ENCODE measurements at regions of chr10 and their contacts with region 1.

Region 1: DNA sequence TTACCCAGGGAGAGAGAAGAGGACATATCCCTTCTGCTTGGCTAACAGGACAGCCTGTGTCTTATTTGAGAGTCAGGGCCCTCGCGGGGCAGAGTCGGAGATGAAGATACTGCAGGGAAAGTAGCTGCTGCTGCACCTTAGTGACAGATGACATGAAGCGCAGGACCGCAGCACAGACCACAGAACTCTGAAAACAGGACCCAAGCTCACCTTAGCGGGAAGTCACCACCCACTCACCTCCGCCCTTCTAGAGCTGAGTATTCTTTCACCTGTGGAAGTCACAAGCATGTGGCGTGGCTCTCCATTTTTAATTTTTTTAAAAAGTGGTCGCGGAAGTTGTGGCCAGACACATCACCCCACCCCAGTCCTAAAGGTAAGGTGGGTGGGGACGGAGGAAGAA is 191.4 kb downstream of the FAM107B start:
- DNase-seq: peak; percentile 70 to 95 (median 78)
- ATAC-seq: peak; percentile 77
- H3K4me3 ChIP-seq: no peak overlapping the region
- H3K4me3 Mint-ChIP-seq: peak overlapping the region; percentile 78
- H3K27ac ChIP-seq: peak overlapping the region; percentile 90 to 95
- H3K27ac Mint-ChIP-seq: peak overlapping the region; percentile 97
- H3K4me1 ChIP-seq: peaks cover 93% of the 10 kb centered on the region
- H3K4me1 Mint-ChIP-seq: peaks cover 98% of the 10 kb centered on the region
- H3K27me3 ChIP-seq: no peaks in the 10 kb centered on the region
- H3K27me3 Mint-ChIP-seq: no peaks in the 10 kb centered on the region
- CTCF ChIP-seq: no peak

Region 2: DNA sequence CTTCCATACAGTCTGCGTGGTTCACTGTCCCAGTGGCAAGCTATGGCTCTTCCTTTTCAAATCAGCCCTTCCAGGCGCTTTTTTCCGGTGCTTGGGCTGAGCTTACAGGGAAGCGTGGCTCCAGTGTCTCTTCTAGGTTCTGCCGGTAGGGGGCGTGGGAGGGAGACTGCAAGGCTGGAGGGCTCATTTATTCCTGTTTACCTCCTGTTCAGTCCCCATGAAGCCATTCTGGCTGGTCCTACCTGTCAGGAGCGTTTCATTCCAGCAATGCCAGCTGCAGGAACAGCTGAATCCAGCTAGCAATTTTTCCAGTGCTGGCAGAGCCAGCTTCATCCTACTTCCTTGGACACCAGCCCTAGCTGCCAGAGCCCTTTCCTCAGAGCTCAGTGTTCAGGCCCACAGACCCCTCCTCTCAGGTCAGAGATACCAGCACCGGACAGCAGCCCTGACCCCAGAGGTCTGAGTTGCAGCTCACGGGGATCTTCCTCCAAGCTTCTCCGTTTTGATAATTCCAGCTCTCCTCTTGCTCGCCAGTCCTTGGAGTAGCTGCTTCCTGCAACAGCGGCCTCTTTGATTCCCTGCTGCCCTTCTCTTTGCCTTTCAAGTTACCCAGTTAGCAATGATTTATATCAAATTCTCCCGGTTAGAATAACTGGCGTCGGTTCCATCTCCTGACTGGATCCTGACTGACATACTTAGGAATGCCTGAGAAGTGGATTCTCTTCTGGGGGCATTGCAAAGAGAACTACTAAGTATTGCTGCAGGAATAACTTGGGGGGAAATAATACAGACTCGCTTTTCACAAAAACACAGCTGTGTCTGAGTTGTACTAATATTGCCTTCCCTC is 382.3 kb before region 1 on chr10:
- CTCF ChIA-PET with region 1: no interaction called
- POLR2A ChIA-PET with region 1: no interaction called
- intact Hi-C with region 1: no loop called
- DNase-seq: no peak
- ATAC-seq: no peak
- H3K4me3 ChIP-seq: no peak overlapping the region
- H3K4me3 Mint-ChIP-seq: no peak overlapping the region
- H3K27ac ChIP-seq: no peak overlapping the region
- H3K27ac Mint-ChIP-seq: no peak overlapping the region
- H3K4me1 ChIP-seq: no peaks in the 10 kb centered on the region
- H3K4me1 Mint-ChIP-seq: no peaks in the 10 kb centered on the region
- H3K27me3 ChIP-seq: peaks cover 8 to 13% of the 10 kb centered on the region in 2 experiments
- H3K27me3 Mint-ChIP-seq: peaks cover 33% of the 10 kb centered on the region
- CTCF ChIP-seq: no peak

Region 3: DNA sequence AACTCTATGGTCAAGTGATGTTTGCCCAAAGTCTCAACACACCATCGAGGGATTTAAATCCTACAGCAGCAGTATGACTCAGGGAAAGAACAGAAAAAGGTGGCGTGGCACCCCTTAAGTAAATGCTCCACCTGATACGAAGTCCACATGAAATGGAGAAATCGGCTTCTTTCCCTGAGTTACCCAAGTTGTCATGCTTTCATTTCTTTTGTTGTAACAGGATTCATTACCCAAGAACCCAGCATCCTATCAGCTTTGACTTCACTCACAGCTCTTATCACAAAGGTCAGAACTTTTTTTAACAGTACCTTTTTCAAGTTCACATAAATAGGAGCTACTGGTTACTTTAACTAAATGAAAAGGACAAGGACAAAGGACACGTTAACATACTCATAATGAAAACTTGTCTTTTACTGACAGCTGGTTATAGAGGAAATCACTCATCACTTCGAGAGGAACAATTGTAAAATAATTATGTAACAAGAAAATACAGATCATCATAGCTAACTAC is 32.7 kb before region 1 on chr10:
- CTCF ChIA-PET with region 1: interaction called, 3 read pairs
- POLR2A ChIA-PET with region 1: interaction called, 16 read pairs
- intact Hi-C with region 1: no loop called
- DNase-seq: no peak
- ATAC-seq: no peak
- H3K4me3 ChIP-seq: no peak overlapping the region
- H3K4me3 Mint-ChIP-seq: peak overlapping the region; percentile 62
- H3K27ac ChIP-seq: peak overlapping the region in 1 of 2 donors; percentile 26
- H3K27ac Mint-ChIP-seq: peak overlapping the region; percentile 98
- H3K4me1 ChIP-seq: peaks cover 68% of the 10 kb centered on the region
- H3K4me1 Mint-ChIP-seq: peaks cover 99% of the 10 kb centered on the region
- H3K27me3 ChIP-seq: no peaks in the 10 kb centered on the region
- H3K27me3 Mint-ChIP-seq: no peaks in the 10 kb centered on the region
- CTCF ChIP-seq: no peak

Region 4: DNA sequence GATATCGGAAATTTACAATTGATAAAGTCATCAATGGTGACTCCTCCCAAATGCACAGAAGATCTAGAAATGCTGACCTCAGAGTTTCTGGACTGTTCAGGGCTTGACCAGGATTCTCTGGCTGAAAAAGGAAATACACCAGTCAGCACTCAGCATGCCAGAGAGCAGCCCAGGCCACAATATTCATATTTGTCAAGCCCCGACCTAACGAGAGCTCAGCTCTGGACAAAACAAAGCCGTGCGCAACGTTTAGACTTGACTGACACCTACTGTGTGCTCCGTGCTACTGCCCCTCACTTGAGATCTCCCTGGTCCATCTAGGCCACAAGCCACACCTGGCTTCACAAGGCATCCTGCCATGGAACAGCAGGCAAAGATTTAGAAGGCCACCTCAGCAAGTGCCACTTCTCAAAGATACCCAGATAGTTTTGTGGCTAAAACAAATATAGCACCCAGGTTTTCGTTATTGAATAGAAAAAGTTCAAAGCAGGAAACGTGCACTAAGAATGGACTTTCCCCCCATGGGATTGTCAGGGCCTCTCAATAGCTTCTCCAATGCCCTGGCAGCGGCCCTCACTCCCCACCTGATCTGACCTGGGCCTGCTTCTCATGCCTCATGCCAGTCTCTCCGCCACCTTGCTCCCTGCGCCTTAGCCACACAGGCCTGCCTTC is 26.8 kb before region 1 on chr10:
- CTCF ChIA-PET with region 1: interaction called, 8 read pairs
- POLR2A ChIA-PET with region 1: interaction called, 19 read pairs
- intact Hi-C with region 1: no loop called
- DNase-seq: peak in 3 of 14 experiments; percentile 68 to 77 (median 71)
- ATAC-seq: peak; percentile 32
- H3K4me3 ChIP-seq: no peak overlapping the region
- H3K4me3 Mint-ChIP-seq: peak overlapping the region; percentile 45
- H3K27ac ChIP-seq: peak overlapping the region; percentile 38 to 53
- H3K27ac Mint-ChIP-seq: peak overlapping the region; percentile 98
- H3K4me1 ChIP-seq: peaks cover 86% of the 10 kb centered on the region
- H3K4me1 Mint-ChIP-seq: peaks cover 98% of the 10 kb centered on the region
- H3K27me3 ChIP-seq: no peaks in the 10 kb centered on the region
- H3K27me3 Mint-ChIP-seq: no peaks in the 10 kb centered on the region
- CTCF ChIP-seq: no peak

Region 5: DNA sequence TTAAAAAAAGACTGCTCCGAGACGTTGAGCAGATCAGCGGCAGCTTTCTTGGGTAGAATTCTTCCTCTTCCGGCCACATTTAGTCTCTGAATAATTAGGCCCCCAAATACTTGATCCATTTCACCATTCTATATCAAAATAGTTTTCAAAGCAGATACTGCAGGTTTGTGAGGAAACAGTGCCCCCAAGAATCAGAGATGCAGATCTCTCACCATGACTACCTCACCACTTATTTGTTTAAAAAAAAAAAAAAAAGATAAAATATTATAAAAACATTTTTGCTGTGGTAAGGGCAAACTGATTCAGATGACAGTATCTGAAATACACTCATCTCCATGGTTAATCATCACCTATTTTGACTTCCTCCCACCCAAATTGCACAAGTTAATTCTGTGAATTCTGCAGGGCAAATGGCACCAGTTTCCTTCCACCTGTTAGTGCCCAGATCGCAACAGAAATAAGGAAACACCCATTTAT is 18.9 kb before region 1 on chr10:
- CTCF ChIA-PET with region 1: interaction called, 8 read pairs
- POLR2A ChIA-PET with region 1: interaction called, 101 read pairs
- intact Hi-C with region 1: no loop called
- DNase-seq: peak in 4 of 14 experiments; percentile 56 to 85 (median 78)
- ATAC-seq: peak; percentile 57
- H3K4me3 ChIP-seq: peak overlapping the region; percentile 32
- H3K4me3 Mint-ChIP-seq: peak overlapping the region; percentile 87
- H3K27ac ChIP-seq: peak overlapping the region; percentile 80 to 82
- H3K27ac Mint-ChIP-seq: peak overlapping the region; percentile 98
- H3K4me1 ChIP-seq: peaks cover 83% of the 10 kb centered on the region
- H3K4me1 Mint-ChIP-seq: peaks cover 97% of the 10 kb centered on the region
- H3K27me3 ChIP-seq: no peaks in the 10 kb centered on the region
- H3K27me3 Mint-ChIP-seq: no peaks in the 10 kb centered on the region
- CTCF ChIP-seq: no peak

Measured in CD4-positive, alpha-beta T cell (primary cell).